IMR-90 (cell line): ENCODE measurements at regions of chr15 and their contacts with region 1.

Region 1: DNA sequence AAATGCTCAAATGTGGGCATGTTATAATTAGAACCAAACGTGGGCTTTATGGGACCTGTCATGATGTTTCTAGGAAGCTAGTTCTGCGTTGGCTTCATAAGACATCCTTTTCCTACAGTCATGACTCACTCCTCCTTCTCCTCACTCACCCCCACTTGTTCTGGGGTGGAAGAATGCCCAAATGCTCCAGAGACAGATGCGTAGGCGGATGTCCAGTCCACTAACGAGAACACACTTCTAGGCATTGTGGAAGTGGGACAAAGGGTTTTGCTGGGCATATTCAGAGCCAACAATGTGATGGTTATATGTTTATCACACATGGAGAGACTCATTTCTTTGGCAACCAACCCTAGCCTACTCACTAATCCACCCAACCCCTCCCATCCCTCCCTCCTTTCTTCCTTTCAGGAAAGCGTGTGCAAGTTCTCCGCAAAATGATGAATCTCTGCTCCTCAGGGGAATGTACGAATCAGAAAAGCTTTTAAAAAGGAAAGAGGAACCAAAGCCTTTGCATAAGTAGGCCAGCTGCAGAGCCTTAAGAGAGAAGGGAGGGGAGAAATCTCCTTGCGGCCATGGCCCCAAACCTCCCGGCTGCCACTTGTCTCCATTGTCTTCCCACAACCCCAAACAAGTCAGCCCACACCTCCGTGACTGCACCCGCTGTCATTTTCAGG is 123.0 kb upstream of the SPRED1 start:
- DNase-seq: peak; percentile 99
- ATAC-seq: peak; percentile 81
- H3K4me3 ChIP-seq: peak overlapping the region; percentile 10; the same call in 1 of the 2 replicates
- H3K27ac ChIP-seq: peak overlapping the region; percentile 54
- H3K4me1 ChIP-seq: peaks cover 4% of the 10 kb centered on the region
- H3K27me3 ChIP-seq: no peaks in the 10 kb centered on the region
- CTCF ChIP-seq: no peak
- POLR2A ChIP-seq: no peak
- RAD21 ChIP-seq: peak; percentile 20

Region 2: GRCh38 chr15:37900326-37901221 is 229.1 kb before region 1 on chr15:
- CTCF ChIA-PET with region 1: no interaction called
- POLR2A ChIA-PET with region 1: no interaction called
- dilution Hi-C with region 1: no loop called
- in situ Hi-C with region 1: no loop called
- intact Hi-C with region 1: no loop called
- DNase-seq: peak; percentile 84
- ATAC-seq: peak; percentile 93
- H3K4me3 ChIP-seq: no peak overlapping the region
- H3K27ac ChIP-seq: peak overlapping the region; percentile 82
- H3K4me1 ChIP-seq: peaks cover 11% of the 10 kb centered on the region
- H3K27me3 ChIP-seq: no peaks in the 10 kb centered on the region
- CTCF ChIP-seq: no peak
- POLR2A ChIP-seq: no peak
- RAD21 ChIP-seq: no peak

Region 3: GRCh38 chr15:38072348-38073177 is 57.1 kb before region 1 on chr15:
- CTCF ChIA-PET with region 1: no interaction called
- POLR2A ChIA-PET with region 1: no interaction called
- dilution Hi-C with region 1: no loop called
- in situ Hi-C with region 1: no loop called
- intact Hi-C with region 1: loop called (anchors 2 kb)
- DNase-seq: peak; percentile 71
- ATAC-seq: peak; percentile 75
- H3K4me3 ChIP-seq: peak overlapping the region; percentile 28
- H3K27ac ChIP-seq: peak overlapping the region; percentile 85
- H3K4me1 ChIP-seq: peaks cover 9% of the 10 kb centered on the region
- H3K27me3 ChIP-seq: no peaks in the 10 kb centered on the region
- CTCF ChIP-seq: peak; percentile 25; the same call in 1 of the 2 replicates
- POLR2A ChIP-seq: no peak
- RAD21 ChIP-seq: peak; percentile 17; the same call in 1 of the 2 replicates

Region 4: GRCh38 chr15:38414357-38414756 is 284.7 kb after region 1 on chr15:
- CTCF ChIA-PET with region 1: no interaction called
- POLR2A ChIA-PET with region 1: no interaction called
- dilution Hi-C with region 1: no loop called
- in situ Hi-C with region 1: no loop called
- intact Hi-C with region 1: loop called (anchors 5 kb)
- DNase-seq: peak; percentile 75
- ATAC-seq: peak; percentile 100
- H3K4me3 ChIP-seq: no peak overlapping the region
- H3K27ac ChIP-seq: no peak overlapping the region
- H3K4me1 ChIP-seq: no peaks in the 10 kb centered on the region
- H3K27me3 ChIP-seq: peaks cover 32% of the 10 kb centered on the region
- CTCF ChIP-seq: peak; percentile 86
- POLR2A ChIP-seq: 0 out of 2 replicates have a peak, but pooled peaks have one; percentile 41
- RAD21 ChIP-seq: peak; percentile 95